ENCODE measurements at regions of chr4 and their contacts with region 1.

Region 1: GRCh38 chr4:149999485-150000074 is 78.7 kb upstream of the DCLK2 start:
- DNase-seq: peak in 2 of 3 donors; percentile 9 to 20
- H3K4me3 ChIP-seq: no peak overlapping the region
- H3K4me3 Mint-ChIP-seq: no peak overlapping the region
- H3K27ac ChIP-seq: no peak overlapping the region
- H3K27ac Mint-ChIP-seq: no peak overlapping the region
- H3K4me1 ChIP-seq: no peaks in the 10 kb centered on the region
- H3K4me1 Mint-ChIP-seq: no peaks in the 10 kb centered on the region
- H3K27me3 ChIP-seq: no peaks in the 10 kb centered on the region
- H3K27me3 Mint-ChIP-seq: peaks cover 0 to 1% (median 0%) of the 10 kb centered on the region in 3 donors
- CTCF ChIP-seq: peak; percentile 61

Region 2: GRCh38 chr4:150209140-150209829 is 209.7 kb after region 1 on chr4:
- intact Hi-C with region 1: loop called in 1 of 2 experiments (anchors 10 kb)
- DNase-seq: peak in 1 of 3 donors; percentile 10
- H3K4me3 ChIP-seq: no peak overlapping the region
- H3K4me3 Mint-ChIP-seq: no peak overlapping the region
- H3K27ac ChIP-seq: no peak overlapping the region
- H3K27ac Mint-ChIP-seq: no peak overlapping the region
- H3K4me1 ChIP-seq: no peaks in the 10 kb centered on the region
- H3K4me1 Mint-ChIP-seq: no peaks in the 10 kb centered on the region
- H3K27me3 ChIP-seq: no peaks in the 10 kb centered on the region
- H3K27me3 Mint-ChIP-seq: peaks cover 0 to 5% (median 2%) of the 10 kb centered on the region in 3 donors
- CTCF ChIP-seq: peak; percentile 36

Region 3: GRCh38 chr4:150242820-150243458 is 243.4 kb after region 1 on chr4:
- intact Hi-C with region 1: loop called in 1 of 2 experiments (anchors 10 kb)
- DNase-seq: peak in 2 of 3 donors; percentile 3 to 15
- H3K4me3 ChIP-seq: no peak overlapping the region
- H3K4me3 Mint-ChIP-seq: no peak overlapping the region
- H3K27ac ChIP-seq: no peak overlapping the region
- H3K27ac Mint-ChIP-seq: no peak overlapping the region
- H3K4me1 ChIP-seq: no peaks in the 10 kb centered on the region
- H3K4me1 Mint-ChIP-seq: no peaks in the 10 kb centered on the region
- H3K27me3 ChIP-seq: no peaks in the 10 kb centered on the region
- H3K27me3 Mint-ChIP-seq: peaks cover 0 to 1% (median 0%) of the 10 kb centered on the region in 3 donors
- CTCF ChIP-seq: peak; percentile 93

Region 4: GRCh38 chr4:150867148-150867547 is 867.6 kb after region 1 on chr4:
- intact Hi-C with region 1: loop called in 1 of 2 experiments (anchors 10 kb)
- DNase-seq: peak; percentile 44 to 65 (median 58)
- H3K4me3 ChIP-seq: no peak overlapping the region
- H3K4me3 Mint-ChIP-seq: no peak overlapping the region
- H3K27ac ChIP-seq: no peak overlapping the region
- H3K27ac Mint-ChIP-seq: no peak overlapping the region
- H3K4me1 ChIP-seq: no peaks in the 10 kb centered on the region
- H3K4me1 Mint-ChIP-seq: no peaks in the 10 kb centered on the region
- H3K27me3 ChIP-seq: no peaks in the 10 kb centered on the region
- H3K27me3 Mint-ChIP-seq: no peaks in the 10 kb centered on the region
- CTCF ChIP-seq: peak; percentile 76